Activated CD4-positive, alpha-beta memory T cell treated with anti-CD3 and anti-CD28 coated beads for 36 hours (primary cell): ENCODE measurements at regions of chr6 and their contacts with region 1.

Region 1: GRCh38 chr6:225121-225721 is 67.1 kb upstream of the DUSP22 start:
- DNase-seq: peak; percentile 90
- H3K4me3 Mint-ChIP-seq: peak overlapping the region; percentile 54
- H3K27ac Mint-ChIP-seq: peak overlapping the region; percentile 96
- H3K4me1 Mint-ChIP-seq: peaks cover 72% of the 10 kb centered on the region
- H3K27me3 Mint-ChIP-seq: peaks cover 12% of the 10 kb centered on the region

Region 2: DNA sequence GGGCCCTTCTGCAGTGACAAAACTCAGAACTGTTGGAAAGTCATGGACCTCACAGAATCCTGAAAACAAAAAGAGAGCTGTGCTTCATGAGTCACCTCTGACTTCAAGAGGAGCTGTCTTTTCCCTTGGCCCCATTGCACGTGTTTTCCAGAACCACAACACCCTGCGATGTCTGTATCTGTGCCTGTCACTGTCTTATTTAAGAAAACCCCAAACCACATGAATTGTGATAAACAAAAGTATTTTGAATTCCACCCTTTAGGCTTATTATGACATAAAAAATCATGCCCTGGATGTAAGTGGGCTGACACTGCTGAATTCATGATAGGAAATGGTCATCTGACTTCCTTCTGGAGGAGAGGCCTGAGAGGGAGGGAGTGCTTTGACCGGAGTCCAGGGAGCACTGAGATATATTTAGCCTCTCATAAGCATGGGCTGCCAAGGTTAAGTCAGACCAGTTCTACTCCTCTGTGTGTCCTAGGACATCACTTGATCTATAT is 29.3 kb before region 1 on chr6:
- CTCF ChIA-PET with region 1: interaction called, 3 read pairs
- POLR2A ChIA-PET with region 1: interaction called, 24 read pairs
- intact Hi-C with region 1: loop called (anchors 1 kb)
- DNase-seq: peak; percentile 84
- H3K4me3 Mint-ChIP-seq: no peak overlapping the region
- H3K27ac Mint-ChIP-seq: peak overlapping the region; percentile 49
- H3K4me1 Mint-ChIP-seq: peaks cover 47% of the 10 kb centered on the region
- H3K27me3 Mint-ChIP-seq: peaks cover 3% of the 10 kb centered on the region

Region 3: DNA sequence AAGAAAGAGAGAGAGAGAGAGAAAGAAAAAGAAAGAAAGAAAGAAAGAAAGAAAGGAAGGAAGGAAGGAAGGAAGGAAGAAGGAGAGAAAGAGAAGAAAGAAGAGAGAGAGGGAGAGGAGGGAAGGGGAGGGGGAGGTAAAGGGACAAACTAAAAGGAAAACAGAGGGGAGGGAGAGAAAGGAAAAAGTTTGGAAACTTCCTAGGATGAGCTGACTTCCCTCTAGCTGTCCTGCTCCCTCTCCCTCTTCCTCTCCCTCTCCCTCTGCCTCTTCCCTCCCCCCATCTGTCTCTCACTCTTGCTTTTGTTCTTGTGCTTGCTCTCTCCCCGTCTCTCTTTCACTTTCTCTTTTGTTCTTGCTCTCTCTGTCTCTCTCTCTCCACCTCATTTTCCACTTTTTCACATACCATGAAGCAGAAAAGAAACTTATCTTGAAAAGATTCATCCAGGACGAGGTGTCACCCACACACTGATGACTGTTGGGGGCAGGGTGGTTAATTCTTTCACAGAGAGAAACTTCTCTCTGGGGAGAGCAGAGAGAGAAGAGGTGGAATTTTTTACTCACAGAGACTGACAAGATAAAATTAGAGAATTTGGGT is 10.6 kb after region 1 on chr6:
- CTCF ChIA-PET with region 1: interaction called, 5 read pairs
- POLR2A ChIA-PET with region 1: interaction called, 3 read pairs
- intact Hi-C with region 1: loop called (anchors 1 kb)
- DNase-seq: peak; percentile 83
- H3K4me3 Mint-ChIP-seq: peak overlapping the region; percentile 24
- H3K27ac Mint-ChIP-seq: peak overlapping the region; percentile 64
- H3K4me1 Mint-ChIP-seq: peaks cover 43% of the 10 kb centered on the region
- H3K27me3 Mint-ChIP-seq: no peaks in the 10 kb centered on the region

Region 4: GRCh38 chr6:319177-320131 is 94.2 kb after region 1 on chr6:
- CTCF ChIA-PET with region 1: no interaction called
- POLR2A ChIA-PET with region 1: no interaction called
- intact Hi-C with region 1: loop called (anchors 1 kb)
- DNase-seq: peak; percentile 55
- H3K4me3 Mint-ChIP-seq: no peak overlapping the region
- H3K27ac Mint-ChIP-seq: peak overlapping the region; percentile 60
- H3K4me1 Mint-ChIP-seq: peaks cover 20% of the 10 kb centered on the region
- H3K27me3 Mint-ChIP-seq: peaks cover 2% of the 10 kb centered on the region

Region 5: GRCh38 chr6:506508-506907 is 281.3 kb after region 1 on chr6:
- CTCF ChIA-PET with region 1: no interaction called
- POLR2A ChIA-PET with region 1: no interaction called
- intact Hi-C with region 1: loop called (anchors 1 kb)
- DNase-seq: peak; percentile 76
- H3K4me3 Mint-ChIP-seq: peak overlapping the region; percentile 30
- H3K27ac Mint-ChIP-seq: peak overlapping the region; percentile 100
- H3K4me1 Mint-ChIP-seq: peaks cover 95% of the 10 kb centered on the region
- H3K27me3 Mint-ChIP-seq: no peaks in the 10 kb centered on the region